ENCODE measurements at regions of chr4 and their contacts with region 1.

Region 1: DNA sequence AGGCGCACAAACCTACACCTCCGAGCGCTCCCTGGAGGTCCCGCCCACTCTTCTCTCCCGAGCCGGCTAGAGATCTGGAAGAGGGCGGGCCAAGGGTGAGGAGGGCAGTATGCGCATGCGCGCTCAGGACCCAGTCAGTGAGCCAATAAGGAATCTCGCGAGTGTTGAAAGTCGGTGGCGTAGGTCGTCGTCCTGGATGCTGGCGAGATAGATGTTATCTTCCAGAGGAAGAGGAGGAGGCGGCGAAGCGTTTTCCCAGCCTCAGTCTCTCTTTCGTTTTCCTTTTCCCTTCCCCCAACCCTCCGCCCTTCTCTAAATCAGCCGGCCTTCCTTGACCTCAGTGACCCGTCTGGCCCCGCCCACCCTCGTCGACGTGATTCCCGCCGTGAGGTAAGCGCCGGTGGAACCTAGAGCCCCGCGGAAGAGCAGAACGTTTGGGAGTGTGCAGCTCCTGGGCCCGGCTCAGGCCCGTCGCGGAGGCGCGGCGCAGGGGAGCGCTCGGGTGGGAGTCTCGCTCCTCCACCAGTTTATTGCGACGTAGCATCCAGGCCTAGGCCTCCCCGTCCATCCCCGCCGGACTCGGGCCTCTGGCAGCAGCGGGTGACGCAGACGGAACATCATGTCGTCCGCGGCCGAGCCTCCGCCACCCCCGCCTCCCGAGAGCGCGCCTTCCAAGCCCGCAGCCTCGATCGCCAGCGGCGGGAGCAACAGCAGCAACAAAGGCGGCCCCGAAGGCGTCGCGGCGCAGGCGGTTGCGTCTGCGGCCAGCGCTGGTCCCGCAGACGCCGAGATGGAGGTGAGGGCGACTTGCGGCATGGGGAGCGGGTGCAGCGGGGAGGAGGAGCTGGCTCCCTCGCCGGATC is at the start of gene SMARCA5:
- DNase-seq: peak; percentile 93 to 99 (median 98)
- ATAC-seq: peak; percentile 92
- H3K4me3 ChIP-seq: peak within 1 kb of the TSS; percentile 91
- H3K4me3 Mint-ChIP-seq: peak within 1 kb of the TSS; percentile 93 to 100 (median 98)
- H3K27ac ChIP-seq: peak within 1 kb of the TSS; percentile 98
- H3K27ac Mint-ChIP-seq: peak within 1 kb of the TSS; percentile 97 to 100 (median 100)
- H3K4me1 ChIP-seq: peaks cover 20 to 36% of the 10 kb centered on the region in 2 donors
- H3K4me1 Mint-ChIP-seq: peaks cover 22 to 54% (median 37%) of the 10 kb centered on the region in 7 donors
- H3K27me3 ChIP-seq: no peaks in the 10 kb centered on the region
- H3K27me3 Mint-ChIP-seq: peaks cover 0 to 30% (median 0%) of the 10 kb centered on the region in 5 donors
- total RNA-seq, gene SMARCA5: 48.3 to 58.2 (median 54.4) TPM

Region 2: GRCh38 chr4:143358923-143359643 is 154.5 kb before region 1 on chr4:
- CTCF ChIA-PET with region 1: no interaction called
- POLR2A ChIA-PET with region 1: no interaction called
- intact Hi-C with region 1: loop called (anchors 1 to 2 kb)
- DNase-seq: peak in 2 of 9 donors; percentile 20 to 30
- ATAC-seq: peak; percentile 83
- H3K4me3 ChIP-seq: peak overlapping the region; percentile 14
- H3K4me3 Mint-ChIP-seq: peak overlapping the region; percentile 52 to 72 (median 66)
- H3K27ac ChIP-seq: no peak overlapping the region
- H3K27ac Mint-ChIP-seq: peak overlapping the region in 8 of 9 donors; percentile 2 to 85 (median 46)
- H3K4me1 ChIP-seq: peaks cover 0 to 9% of the 10 kb centered on the region in 2 donors
- H3K4me1 Mint-ChIP-seq: peaks cover 14 to 21% (median 17%) of the 10 kb centered on the region in 7 donors
- H3K27me3 ChIP-seq: no peaks in the 10 kb centered on the region
- H3K27me3 Mint-ChIP-seq: peaks cover 0 to 5% (median 0%) of the 10 kb centered on the region in 5 donors

Region 3: DNA sequence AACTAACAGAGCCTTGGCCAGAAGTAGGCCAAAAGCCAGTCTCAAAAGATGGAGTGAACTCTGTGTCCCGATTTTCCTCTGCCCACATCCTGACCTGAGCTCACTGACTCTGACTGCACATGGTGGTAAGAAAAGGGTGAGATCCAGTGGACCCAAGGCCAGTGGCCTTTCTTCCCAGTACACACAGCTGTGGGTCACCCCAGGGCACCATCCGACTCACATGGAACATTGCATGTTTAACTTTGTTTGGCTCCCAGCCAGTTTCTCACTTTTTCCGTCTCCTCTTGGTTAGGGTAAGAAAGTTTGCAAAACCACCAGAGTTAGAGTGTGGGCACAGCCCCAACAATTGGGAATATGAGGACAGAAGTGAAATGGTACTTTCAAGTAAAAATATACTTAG is 107.0 kb before region 1 on chr4:
- CTCF ChIA-PET with region 1: no interaction called
- POLR2A ChIA-PET with region 1: no interaction called
- intact Hi-C with region 1: loop called in 1 of 2 experiments (anchors 2 kb)
- DNase-seq: no peak
- ATAC-seq: no peak
- H3K4me3 ChIP-seq: no peak overlapping the region
- H3K4me3 Mint-ChIP-seq: no peak overlapping the region
- H3K27ac ChIP-seq: no peak overlapping the region
- H3K27ac Mint-ChIP-seq: no peak overlapping the region
- H3K4me1 ChIP-seq: peaks cover 0 to 5% of the 10 kb centered on the region in 2 donors
- H3K4me1 Mint-ChIP-seq: peaks cover 10 to 25% (median 18%) of the 10 kb centered on the region in 7 donors
- H3K27me3 ChIP-seq: no peaks in the 10 kb centered on the region
- H3K27me3 Mint-ChIP-seq: peaks cover 6 to 22% (median 14%) of the 10 kb centered on the region in 5 donors

Region 4: DNA sequence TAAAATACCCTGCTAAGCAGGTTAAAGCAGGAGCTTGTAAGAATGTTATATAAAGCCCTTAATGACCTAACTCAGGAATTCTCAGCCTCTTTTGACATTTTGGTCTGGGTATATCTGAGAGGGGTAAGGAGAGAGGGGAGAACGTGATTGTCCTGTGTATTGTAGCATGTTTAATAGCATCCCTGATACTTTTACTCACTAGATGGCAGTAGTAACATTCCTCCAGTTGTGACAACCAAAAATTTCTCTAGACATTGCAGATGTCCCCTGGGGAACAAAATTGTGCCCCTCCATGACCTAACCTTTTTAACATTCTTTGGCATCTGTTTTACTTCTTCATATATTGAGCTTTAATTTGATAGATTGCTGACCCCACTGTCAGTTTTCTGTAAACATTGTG is 17.8 kb after region 1 on chr4:
- CTCF ChIA-PET with region 1: no interaction called
- POLR2A ChIA-PET with region 1: interaction called, 3 read pairs
- intact Hi-C with region 1: loop called (anchors 2 kb)
- DNase-seq: no peak
- ATAC-seq: peak; percentile 57
- H3K4me3 ChIP-seq: no peak overlapping the region
- H3K4me3 Mint-ChIP-seq: no peak overlapping the region
- H3K27ac ChIP-seq: no peak overlapping the region
- H3K27ac Mint-ChIP-seq: peak overlapping the region in 2 of 9 donors; percentile 11 to 80
- H3K4me1 ChIP-seq: no peaks in the 10 kb centered on the region
- H3K4me1 Mint-ChIP-seq: peaks cover 9 to 25% (median 19%) of the 10 kb centered on the region in 7 donors
- H3K27me3 ChIP-seq: no peaks in the 10 kb centered on the region
- H3K27me3 Mint-ChIP-seq: no peaks in the 10 kb centered on the region

Region 5: GRCh38 chr4:145097821-145098674 is 1584.5 kb after region 1 on chr4 and contains the starts of genes ABCE1 and ANAPC10:
- CTCF ChIA-PET with region 1: no interaction called
- POLR2A ChIA-PET with region 1: no interaction called
- intact Hi-C with region 1: loop called (anchors 1 kb)
- DNase-seq: peak; percentile 88 to 98 (median 94)
- ATAC-seq: peak; percentile 96
- H3K4me3 ChIP-seq: peak within 1 kb of the TSS; percentile 94
- H3K4me3 Mint-ChIP-seq: peak within 1 kb of the TSS in 9 of 10 donors; percentile 93 to 98 (median 96)
- H3K27ac ChIP-seq: peak within 1 kb of the TSS; percentile 80
- H3K27ac Mint-ChIP-seq: peak within 1 kb of the TSS; percentile 95 to 99 (median 98)
- H3K4me1 ChIP-seq: peaks cover 22 to 23% of the 10 kb centered on the region in 2 donors
- H3K4me1 Mint-ChIP-seq: peaks cover 28 to 52% (median 33%) of the 10 kb centered on the region in 7 donors
- H3K27me3 ChIP-seq: no peaks in the 10 kb centered on the region
- H3K27me3 Mint-ChIP-seq: no peaks in the 10 kb centered on the region
- total RNA-seq, gene ABCE1: 43.4 to 81.3 (median 62.2) TPM
- total RNA-seq, gene ANAPC10: 13.2 to 28.0 (median 19.6) TPM